ENCODE measurements at regions of chr2 and their contacts with region 1.

Region 1: GRCh38 chr2:75709297-75709696 is 1.4 kb downstream of the GCFC2 start:
- DNase-seq: no peak
- H3K4me3 ChIP-seq: peak overlapping the region; percentile 59 to 81 (median 73)
- H3K27ac ChIP-seq: no peak overlapping the region
- H3K4me1 ChIP-seq: peaks cover 3 to 30% (median 22%) of the 10 kb centered on the region in 4 donors
- H3K27me3 ChIP-seq: no peaks in the 10 kb centered on the region
- CTCF ChIP-seq: no peak
- EP300 ChIP-seq: no peak
- POLR2A ChIP-seq: no peak

Region 2: GRCh38 chr2:75459565-75460310 is 249.6 kb before region 1 on chr2:
- intact Hi-C with region 1: no loop called
- DNase-seq: no peak
- H3K4me3 ChIP-seq: no peak overlapping the region
- H3K27ac ChIP-seq: no peak overlapping the region
- H3K4me1 ChIP-seq: no peaks in the 10 kb centered on the region
- H3K27me3 ChIP-seq: peaks cover 0 to 12% (median 0%) of the 10 kb centered on the region in 4 donors
- CTCF ChIP-seq: no peak
- EP300 ChIP-seq: no peak
- POLR2A ChIP-seq: no peak

Region 3: DNA sequence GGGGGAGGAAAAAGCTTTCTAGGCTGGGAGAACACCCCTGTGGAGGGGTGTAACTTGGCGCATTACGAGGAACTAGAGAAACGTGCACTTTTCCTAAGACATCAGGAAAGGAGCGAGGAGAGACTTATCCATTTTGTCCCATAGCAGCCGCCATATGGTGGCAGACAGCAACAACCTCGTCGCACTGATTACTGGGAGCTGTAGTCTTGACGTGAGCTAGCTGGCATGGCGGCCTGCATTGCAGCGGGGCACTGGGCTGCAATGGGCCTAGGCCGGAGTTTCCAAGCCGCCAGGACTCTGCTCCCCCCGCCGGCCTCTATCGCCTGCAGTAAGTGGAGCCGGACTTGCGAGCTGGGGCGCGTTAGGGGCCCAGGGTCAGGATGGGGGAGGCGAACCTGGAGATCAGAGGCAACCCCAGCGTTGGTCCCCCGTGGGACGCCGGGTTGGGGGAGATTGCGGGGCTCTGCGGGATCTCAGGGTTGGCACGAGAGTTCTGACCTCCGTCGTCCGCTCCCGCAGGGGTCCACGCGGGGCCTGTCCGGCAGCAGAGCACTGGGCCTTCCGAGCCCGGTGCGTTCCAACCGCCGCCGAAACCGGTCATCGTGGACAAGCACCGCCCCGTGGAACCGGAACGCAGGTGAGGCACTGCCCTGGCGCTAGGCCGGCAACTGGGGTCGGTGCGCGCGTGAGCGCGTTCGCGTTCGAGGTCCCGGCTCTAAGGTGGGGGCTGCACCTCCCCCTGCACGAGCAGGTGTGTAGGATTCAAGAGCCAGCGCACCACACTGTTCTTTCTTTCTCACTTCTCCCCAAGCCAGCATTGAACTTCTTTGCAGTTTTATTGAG is 62.5 kb before region 1 on chr2 and contains the start of gene MRPL19:
- intact Hi-C with region 1: loop called (anchors 5 kb)
- DNase-seq: peak; percentile 95
- H3K4me3 ChIP-seq: peak within 1 kb of the TSS; percentile 87 to 96 (median 92)
- H3K27ac ChIP-seq: peak within 1 kb of the TSS; percentile 70 to 83 (median 76)
- H3K4me1 ChIP-seq: peaks cover 14 to 31% (median 27%) of the 10 kb centered on the region in 4 donors
- H3K27me3 ChIP-seq: no peaks in the 10 kb centered on the region
- CTCF ChIP-seq: peak in 1 of 3 experiments; percentile 3
- EP300 ChIP-seq: no peak
- POLR2A ChIP-seq: no peak
- total RNA-seq, gene MRPL19: 24.5 to 40.5 (median 31.4) TPM